ENCODE measurements at regions of chr18 and their contacts with region 1.

Region 1: DNA sequence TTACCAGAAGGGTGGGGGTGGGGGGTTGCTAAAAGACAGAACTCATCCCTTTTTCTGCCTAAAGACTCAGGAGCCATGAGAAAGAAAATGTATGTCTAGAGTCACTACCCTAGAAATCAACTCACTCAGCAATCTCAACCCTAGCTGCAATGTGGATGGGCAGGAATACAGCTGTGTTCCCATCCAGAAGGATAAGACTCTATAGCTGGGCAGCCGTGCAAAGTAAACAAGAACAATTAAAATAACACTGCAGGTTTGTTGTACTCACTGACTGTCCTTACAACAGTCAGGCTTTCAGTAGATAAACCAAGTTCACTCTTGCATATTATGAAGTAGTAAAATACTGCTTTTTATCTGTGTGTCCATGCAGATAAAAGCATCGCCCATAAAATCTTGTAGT is 74.0 kb downstream of the ESCO1 start:
- DNase-seq: no peak
- ATAC-seq: peak in 2 of 4 donors; percentile 57 to 65
- H3K4me3 ChIP-seq: no peak overlapping the region
- H3K27ac ChIP-seq: no peak overlapping the region
- H3K4me1 ChIP-seq: no peaks in the 10 kb centered on the region
- H3K27me3 ChIP-seq: no peaks in the 10 kb centered on the region
- CTCF ChIP-seq: no peak
- POLR2A ChIP-seq: no peak

Region 2: DNA sequence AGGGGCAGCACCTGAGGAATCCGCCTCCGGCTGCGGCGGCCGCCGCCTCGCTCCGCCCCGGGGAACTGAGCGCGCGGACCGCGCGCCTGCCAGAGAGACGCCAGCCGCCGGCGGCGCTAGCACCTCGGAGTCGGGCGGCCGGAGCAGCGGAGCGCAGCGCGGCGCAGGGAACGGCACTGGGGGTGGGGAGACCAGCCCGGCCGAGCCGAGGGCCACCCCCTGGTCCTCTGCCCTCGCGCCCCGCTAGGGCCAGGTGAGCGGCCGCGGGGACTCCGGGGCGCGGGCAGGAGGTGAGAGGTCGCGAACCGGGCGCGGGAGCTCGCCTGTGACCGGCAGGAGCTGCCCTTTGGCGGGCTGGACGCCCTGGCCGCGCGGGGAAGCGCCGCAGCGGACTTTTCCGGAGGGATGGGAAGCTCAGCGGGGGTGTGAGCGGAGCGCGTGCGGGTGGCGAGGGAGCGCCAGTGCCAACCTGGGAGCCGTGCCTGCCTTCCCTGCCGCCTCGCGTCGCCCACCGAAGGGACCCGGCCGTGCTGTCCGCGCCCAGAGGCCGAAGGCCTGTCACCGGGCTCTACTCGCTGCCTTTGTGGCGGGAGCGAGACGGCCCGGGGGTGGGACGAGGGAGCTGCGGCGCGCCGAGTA is 284.2 kb before region 1 on chr18 and contains the start of gene GREB1L:
- intact Hi-C with region 1: no loop called
- DNase-seq: peak; percentile 50 to 78 (median 70)
- ATAC-seq: peak; percentile 86 to 95 (median 92)
- H3K4me3 ChIP-seq: peak within 1 kb of the TSS; percentile 41 to 82 (median 61)
- H3K27ac ChIP-seq: peak within 1 kb of the TSS; percentile 20 to 86 (median 69)
- H3K4me1 ChIP-seq: peaks cover 0 to 18% (median 0%) of the 10 kb centered on the region in 12 donors
- H3K27me3 ChIP-seq: peaks cover 0 to 66% (median 15%) of the 10 kb centered on the region in 9 donors
- CTCF ChIP-seq: peak in 8 of 12 donors; percentile 24 to 52 (median 38)
- POLR2A ChIP-seq: peak in 1 of 2 donors; percentile 19
- total RNA-seq, gene GREB1L: 7.5 to 21.5 (median 10.6) TPM

Region 3: DNA sequence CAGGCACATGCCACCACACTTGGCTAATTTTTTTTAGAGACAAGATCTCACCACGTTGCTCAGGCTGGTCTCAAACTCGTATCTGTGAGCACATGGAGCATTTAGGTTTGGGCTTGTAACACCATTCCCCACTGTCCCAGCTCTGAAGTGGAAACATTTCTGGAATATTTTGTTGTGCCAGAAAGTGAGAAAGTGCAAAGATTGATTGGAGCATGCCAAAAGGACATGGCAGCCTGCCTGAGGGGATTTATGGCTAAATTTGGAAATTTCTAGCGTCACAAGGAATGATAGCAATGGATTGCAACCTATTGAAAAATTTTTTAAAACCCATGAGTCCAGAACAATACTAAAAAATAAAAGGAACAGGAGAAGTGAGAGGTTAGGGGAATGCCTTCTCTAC is 62.7 kb before region 1 on chr18:
- intact Hi-C with region 1: loop called in 1 of 10 experiments (anchors 10 kb)
- DNase-seq: no peak
- ATAC-seq: no peak
- H3K4me3 ChIP-seq: no peak overlapping the region
- H3K27ac ChIP-seq: peak overlapping the region in 2 of 12 donors; percentile 4 to 13
- H3K4me1 ChIP-seq: peaks cover 0 to 17% (median 1%) of the 10 kb centered on the region in 12 donors
- H3K27me3 ChIP-seq: no peaks in the 10 kb centered on the region
- CTCF ChIP-seq: no peak
- POLR2A ChIP-seq: no peak

Region 4: GRCh38 chr18:21571772-21572171 is 45.3 kb after region 1 on chr18:
- intact Hi-C with region 1: loop called in 1 of 10 experiments (anchors 10 kb)
- DNase-seq: no peak
- ATAC-seq: no peak
- H3K4me3 ChIP-seq: no peak overlapping the region
- H3K27ac ChIP-seq: no peak overlapping the region
- H3K4me1 ChIP-seq: peaks cover 0 to 9% (median 0%) of the 10 kb centered on the region in 12 donors
- H3K27me3 ChIP-seq: no peaks in the 10 kb centered on the region
- CTCF ChIP-seq: no peak
- POLR2A ChIP-seq: no peak

Region 5: GRCh38 chr18:21769206-21769605 is 242.7 kb after region 1 on chr18:
- intact Hi-C with region 1: no loop called
- DNase-seq: no peak
- ATAC-seq: no peak
- H3K4me3 ChIP-seq: no peak overlapping the region
- H3K27ac ChIP-seq: no peak overlapping the region
- H3K4me1 ChIP-seq: peaks cover 0 to 6% (median 3%) of the 10 kb centered on the region in 12 donors
- H3K27me3 ChIP-seq: no peaks in the 10 kb centered on the region
- CTCF ChIP-seq: no peak
- POLR2A ChIP-seq: no peak